ENCODE measurements at regions of chr1 and their contacts with region 1.

Region 1: DNA sequence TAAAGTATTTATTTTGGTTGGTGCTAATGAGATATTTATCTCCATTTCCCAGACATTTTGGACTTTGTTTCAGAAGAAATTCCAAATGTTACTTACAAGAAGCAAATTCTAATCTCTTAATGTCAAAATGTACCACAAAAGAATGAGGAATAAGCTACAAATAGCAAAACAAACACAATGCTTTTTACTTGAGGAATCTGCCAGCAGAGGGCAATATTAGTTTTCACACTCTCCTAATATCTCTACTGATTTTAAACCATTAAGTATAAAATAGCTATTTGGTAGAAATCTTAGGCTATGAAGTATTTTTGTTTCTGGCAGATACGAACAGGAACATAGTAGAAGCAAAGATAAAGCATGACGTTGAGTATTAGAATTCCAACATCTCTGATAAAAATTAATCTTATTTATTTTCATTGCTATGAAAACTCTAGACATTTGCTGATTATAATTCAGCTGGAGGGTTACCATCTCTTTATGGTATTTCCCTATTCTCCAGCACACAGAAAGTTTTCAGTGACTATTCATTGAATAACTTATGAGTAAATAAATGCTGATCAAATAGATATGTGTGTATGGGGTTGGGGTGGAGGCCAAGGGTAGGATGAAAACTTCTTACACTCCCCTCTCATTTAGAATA is 13.4 kb upstream of the HMCN1 start:
- DNase-seq: peak; percentile 65
- H3K4me3 Mint-ChIP-seq: no peak overlapping the region
- H3K27ac Mint-ChIP-seq: no peak overlapping the region
- H3K4me1 Mint-ChIP-seq: peaks cover 22% of the 10 kb centered on the region
- H3K27me3 Mint-ChIP-seq: no peaks in the 10 kb centered on the region
- CTCF ChIP-seq: peak; percentile 63

Region 2: DNA sequence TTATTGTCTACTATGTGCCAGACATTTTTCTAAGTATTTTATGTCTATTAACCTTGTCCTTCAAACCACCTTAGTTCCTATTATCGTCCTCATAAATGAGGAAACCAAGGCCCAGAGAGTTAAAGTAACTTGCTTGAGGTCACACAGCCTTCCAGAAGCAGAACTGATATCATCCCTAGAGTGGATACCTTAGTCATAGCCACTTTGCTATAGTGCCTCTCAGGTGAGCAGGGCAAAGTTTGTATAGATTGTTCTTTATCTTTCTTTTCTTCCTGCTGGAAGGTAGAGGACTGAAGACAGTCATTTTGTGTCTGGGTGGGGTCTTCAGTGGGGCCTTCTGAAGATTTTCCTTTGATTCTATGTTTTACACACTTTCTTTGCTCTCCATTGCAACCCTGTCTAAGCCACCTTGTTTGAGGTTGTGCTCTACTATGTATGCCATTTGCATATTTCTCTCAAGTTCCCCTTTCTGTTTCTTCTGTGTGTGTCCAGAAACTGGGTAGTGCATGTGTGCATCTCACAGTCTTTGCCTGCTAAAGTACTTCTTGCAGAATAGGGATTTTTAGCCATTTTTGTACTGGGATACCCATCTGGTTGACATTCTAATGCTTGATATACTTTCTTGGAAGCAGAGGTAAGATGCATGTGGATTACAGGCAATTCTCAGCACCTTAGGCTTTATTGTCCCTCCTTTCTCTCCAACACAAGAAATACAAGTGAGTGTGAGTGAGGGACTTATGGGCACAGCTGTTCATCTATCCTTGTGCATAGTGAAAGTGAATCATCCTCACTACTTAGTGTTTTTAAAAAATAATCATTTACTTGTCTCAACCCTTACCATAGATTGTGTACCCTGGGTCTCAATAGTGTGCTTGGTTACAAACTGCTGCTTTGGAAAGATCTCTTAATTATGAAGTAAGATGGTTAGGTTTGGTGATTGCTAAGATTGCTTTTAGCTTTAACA is 194.1 kb before region 1 on chr1:
- CTCF ChIA-PET with region 1: no interaction called
- POLR2A ChIA-PET with region 1: no interaction called
- intact Hi-C with region 1: no loop called
- DNase-seq: no peak
- H3K4me3 Mint-ChIP-seq: no peak overlapping the region
- H3K27ac Mint-ChIP-seq: no peak overlapping the region
- H3K4me1 Mint-ChIP-seq: no peaks in the 10 kb centered on the region
- H3K27me3 Mint-ChIP-seq: no peaks in the 10 kb centered on the region
- CTCF ChIP-seq: no peak

Region 3: GRCh38 chr1:185674201-185674600 is 46.6 kb before region 1 on chr1:
- CTCF ChIA-PET with region 1: no interaction called
- POLR2A ChIA-PET with region 1: no interaction called
- intact Hi-C with region 1: no loop called
- DNase-seq: no peak
- H3K4me3 Mint-ChIP-seq: no peak overlapping the region
- H3K27ac Mint-ChIP-seq: no peak overlapping the region
- H3K4me1 Mint-ChIP-seq: no peaks in the 10 kb centered on the region
- H3K27me3 Mint-ChIP-seq: no peaks in the 10 kb centered on the region
- CTCF ChIP-seq: no peak

Region 4: DNA sequence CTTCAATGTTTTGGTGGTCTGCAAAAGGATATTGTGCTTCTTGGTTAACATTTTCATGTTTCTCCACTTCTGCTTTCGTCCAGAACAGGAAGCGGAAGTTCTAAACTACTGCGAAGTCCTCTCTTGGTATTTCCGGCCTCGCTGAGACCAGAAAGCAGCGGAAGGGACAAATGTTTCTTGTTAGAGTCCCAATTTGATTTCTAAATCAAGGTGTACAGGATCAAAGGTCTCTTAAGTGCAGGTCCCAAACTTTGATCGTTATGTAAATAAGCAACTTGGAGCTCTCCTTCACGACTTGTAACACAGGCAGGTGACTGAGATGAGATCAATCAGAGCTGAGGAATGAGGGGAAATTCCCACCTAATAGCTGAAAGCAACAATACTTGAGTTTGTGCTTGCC is 26.7 kb before region 1 on chr1:
- CTCF ChIA-PET with region 1: interaction called, 14 read pairs
- POLR2A ChIA-PET with region 1: no interaction called
- intact Hi-C with region 1: no loop called
- DNase-seq: no peak
- H3K4me3 Mint-ChIP-seq: no peak overlapping the region
- H3K27ac Mint-ChIP-seq: peak overlapping the region; percentile 4
- H3K4me1 Mint-ChIP-seq: peaks cover 6% of the 10 kb centered on the region
- H3K27me3 Mint-ChIP-seq: no peaks in the 10 kb centered on the region
- CTCF ChIP-seq: no peak

Region 5: GRCh38 chr1:185733818-185734771 is 13.3 kb after region 1 on chr1 and contains the start of gene HMCN1:
- CTCF ChIA-PET with region 1: interaction called, 50 read pairs
- POLR2A ChIA-PET with region 1: interaction called, 5 read pairs
- intact Hi-C with region 1: no loop called
- DNase-seq: peak; percentile 66
- H3K4me3 Mint-ChIP-seq: peak within 1 kb of the TSS; percentile 70
- H3K27ac Mint-ChIP-seq: no peak within 1 kb of the TSS
- H3K4me1 Mint-ChIP-seq: peaks cover 7% of the 10 kb centered on the region
- H3K27me3 Mint-ChIP-seq: no peaks in the 10 kb centered on the region
- CTCF ChIP-seq: no peak
- total RNA-seq, gene HMCN1: 0.07 and 0.12 TPM in 2 replicates

Region 6: DNA sequence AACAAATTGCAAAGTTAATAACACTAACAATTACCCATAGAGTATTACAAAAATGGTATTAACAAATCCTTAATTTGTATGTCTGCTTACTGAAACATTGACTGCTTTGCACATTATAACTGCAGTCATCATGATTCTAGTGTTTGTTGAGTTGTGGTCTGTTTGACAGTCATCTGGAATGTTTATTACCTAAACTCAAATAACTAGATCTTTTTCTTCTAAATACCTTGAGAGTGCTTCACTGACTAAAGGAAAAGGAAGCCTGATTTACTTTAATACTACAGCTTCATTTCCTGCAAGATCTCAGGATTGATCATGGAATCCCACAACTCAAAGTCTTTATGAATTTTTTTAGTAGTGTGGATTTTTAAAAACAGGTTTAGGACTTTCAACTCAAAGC is 83.5 kb after region 1 on chr1:
- CTCF ChIA-PET with region 1: interaction called, 5 read pairs
- POLR2A ChIA-PET with region 1: no interaction called
- intact Hi-C with region 1: loop called (anchors 5 kb)
- DNase-seq: no peak
- H3K4me3 Mint-ChIP-seq: no peak overlapping the region
- H3K27ac Mint-ChIP-seq: no peak overlapping the region
- H3K4me1 Mint-ChIP-seq: no peaks in the 10 kb centered on the region
- H3K27me3 Mint-ChIP-seq: no peaks in the 10 kb centered on the region
- CTCF ChIP-seq: no peak

Region 7: DNA sequence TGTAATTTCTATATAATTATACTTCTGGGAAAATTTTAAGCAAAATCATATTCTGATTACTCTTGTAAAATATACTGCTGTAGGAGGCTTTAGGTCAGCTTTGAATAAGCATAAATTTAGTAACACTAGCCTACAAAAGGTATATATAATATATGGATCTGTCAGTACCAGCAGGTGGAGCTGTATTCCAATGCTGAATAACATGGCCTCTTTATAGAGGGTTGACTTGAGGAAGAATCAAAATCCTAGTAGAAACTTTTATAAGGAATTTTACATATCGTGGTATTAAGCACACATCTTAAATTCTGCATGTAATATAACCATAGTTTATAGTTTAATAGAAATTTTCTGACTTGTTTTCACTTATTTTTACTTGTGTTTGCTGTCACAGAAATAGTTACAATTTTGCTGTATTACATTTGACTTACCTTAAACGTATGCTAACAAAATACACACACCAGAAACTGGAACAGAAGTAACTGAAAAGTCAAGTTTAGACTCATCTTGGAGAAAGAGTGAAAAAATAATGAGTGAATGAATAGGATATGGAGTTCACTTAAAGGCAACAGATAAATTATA is 92.7 kb after region 1 on chr1:
- CTCF ChIA-PET with region 1: interaction called, 11 read pairs
- POLR2A ChIA-PET with region 1: no interaction called
- intact Hi-C with region 1: loop called (anchors 5 kb)
- DNase-seq: peak; percentile 80
- H3K4me3 Mint-ChIP-seq: no peak overlapping the region
- H3K27ac Mint-ChIP-seq: no peak overlapping the region
- H3K4me1 Mint-ChIP-seq: no peaks in the 10 kb centered on the region
- H3K27me3 Mint-ChIP-seq: no peaks in the 10 kb centered on the region
- CTCF ChIP-seq: peak; percentile 68

Region 8: GRCh38 chr1:186155594-186155993 is 434.8 kb after region 1 on chr1:
- CTCF ChIA-PET with region 1: interaction called, 39 read pairs
- POLR2A ChIA-PET with region 1: interaction called, 3 read pairs
- intact Hi-C with region 1: loop called (anchors 1 kb)
- DNase-seq: peak; percentile 83
- H3K4me3 Mint-ChIP-seq: no peak overlapping the region
- H3K27ac Mint-ChIP-seq: no peak overlapping the region
- H3K4me1 Mint-ChIP-seq: peaks cover 13% of the 10 kb centered on the region
- H3K27me3 Mint-ChIP-seq: no peaks in the 10 kb centered on the region
- CTCF ChIP-seq: peak; percentile 57